ENCODE measurements at regions of chr2 and their contacts with region 1.

Region 1: GRCh38 chr2:196277002-196277401 is 105.6 kb upstream of the STK17B start:
- DNase-seq: no peak
- ATAC-seq: peak; percentile 48
- H3K4me3 Mint-ChIP-seq: no peak overlapping the region
- H3K27ac Mint-ChIP-seq: peak overlapping the region; percentile 95
- H3K4me1 Mint-ChIP-seq: peaks cover 41% of the 10 kb centered on the region
- H3K27me3 Mint-ChIP-seq: no peaks in the 10 kb centered on the region
- CTCF ChIP-seq: peak; percentile 34

Region 2: GRCh38 chr2:196076778-196077568 is 200.0 kb before region 1 on chr2:
- CTCF ChIA-PET with region 1: interaction called, 106 read pairs
- POLR2A ChIA-PET with region 1: interaction called, 22 read pairs
- intact Hi-C with region 1: loop called (anchors 1 kb)
- DNase-seq: no peak
- ATAC-seq: no peak
- H3K4me3 Mint-ChIP-seq: no peak overlapping the region
- H3K27ac Mint-ChIP-seq: peak overlapping the region; percentile 1
- H3K4me1 Mint-ChIP-seq: peaks cover 38% of the 10 kb centered on the region
- H3K27me3 Mint-ChIP-seq: no peaks in the 10 kb centered on the region
- CTCF ChIP-seq: no peak

Region 3: DNA sequence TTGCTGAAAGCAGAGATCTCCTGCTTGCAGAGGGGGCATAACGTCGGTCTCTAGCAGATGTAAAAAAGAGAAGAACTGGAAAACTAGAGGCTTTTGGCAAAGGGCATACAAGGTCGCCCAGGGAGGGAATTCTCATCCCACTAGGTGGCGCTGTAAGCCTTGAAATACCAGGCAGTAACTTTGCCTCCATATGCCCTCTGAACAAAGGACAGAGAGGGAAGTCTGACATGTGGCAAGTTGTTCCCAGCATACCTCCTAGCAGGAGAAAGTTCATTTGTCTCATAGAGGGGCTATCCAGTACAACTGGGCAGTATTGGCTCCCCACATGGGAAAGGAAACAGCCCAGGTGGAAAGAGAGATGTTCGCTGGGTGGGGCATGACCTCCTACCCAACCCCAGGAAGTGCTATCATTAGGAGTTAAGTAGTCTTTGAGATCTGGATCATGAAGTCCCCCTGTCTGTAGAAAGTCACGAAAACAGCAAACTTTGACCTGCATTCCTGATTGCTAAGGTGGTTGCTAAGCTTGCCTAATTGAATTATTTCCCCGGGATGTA is 145.5 kb before region 1 on chr2:
- CTCF ChIA-PET with region 1: interaction called, 12 read pairs
- POLR2A ChIA-PET with region 1: interaction called, 13 read pairs
- intact Hi-C with region 1: loop called (anchors 1 kb)
- DNase-seq: no peak
- ATAC-seq: peak; percentile 44
- H3K4me3 Mint-ChIP-seq: no peak overlapping the region
- H3K27ac Mint-ChIP-seq: peak overlapping the region; percentile 46
- H3K4me1 Mint-ChIP-seq: no peaks in the 10 kb centered on the region
- H3K27me3 Mint-ChIP-seq: no peaks in the 10 kb centered on the region
- CTCF ChIP-seq: no peak

Region 4: GRCh38 chr2:196160101-196160500 is 116.9 kb before region 1 on chr2:
- CTCF ChIA-PET with region 1: interaction called, 14 read pairs
- POLR2A ChIA-PET with region 1: interaction called, 13 read pairs
- intact Hi-C with region 1: loop called (anchors 2 kb)
- DNase-seq: no peak
- ATAC-seq: peak; percentile 75
- H3K4me3 Mint-ChIP-seq: peak overlapping the region; percentile 57
- H3K27ac Mint-ChIP-seq: peak overlapping the region; percentile 84
- H3K4me1 Mint-ChIP-seq: peaks cover 86% of the 10 kb centered on the region
- H3K27me3 Mint-ChIP-seq: no peaks in the 10 kb centered on the region
- CTCF ChIP-seq: no peak

Region 5: GRCh38 chr2:196205881-196206435 is 71.0 kb before region 1 on chr2:
- CTCF ChIA-PET with region 1: interaction called, 5 read pairs
- POLR2A ChIA-PET with region 1: interaction called, 6 read pairs
- intact Hi-C with region 1: loop called (anchors 1 kb)
- DNase-seq: no peak
- ATAC-seq: no peak
- H3K4me3 Mint-ChIP-seq: no peak overlapping the region
- H3K27ac Mint-ChIP-seq: peak overlapping the region; percentile 51
- H3K4me1 Mint-ChIP-seq: peaks cover 47% of the 10 kb centered on the region
- H3K27me3 Mint-ChIP-seq: no peaks in the 10 kb centered on the region
- CTCF ChIP-seq: no peak

Region 6: GRCh38 chr2:196249860-196250259 is 27.1 kb before region 1 on chr2:
- CTCF ChIA-PET with region 1: interaction called, 17 read pairs
- POLR2A ChIA-PET with region 1: interaction called, 18 read pairs
- intact Hi-C with region 1: loop called (anchors 1 kb)
- DNase-seq: peak; percentile 29
- ATAC-seq: peak; percentile 90
- H3K4me3 Mint-ChIP-seq: peak overlapping the region; percentile 47
- H3K27ac Mint-ChIP-seq: peak overlapping the region; percentile 91
- H3K4me1 Mint-ChIP-seq: peaks cover 75% of the 10 kb centered on the region
- H3K27me3 Mint-ChIP-seq: no peaks in the 10 kb centered on the region
- CTCF ChIP-seq: no peak

Region 7: DNA sequence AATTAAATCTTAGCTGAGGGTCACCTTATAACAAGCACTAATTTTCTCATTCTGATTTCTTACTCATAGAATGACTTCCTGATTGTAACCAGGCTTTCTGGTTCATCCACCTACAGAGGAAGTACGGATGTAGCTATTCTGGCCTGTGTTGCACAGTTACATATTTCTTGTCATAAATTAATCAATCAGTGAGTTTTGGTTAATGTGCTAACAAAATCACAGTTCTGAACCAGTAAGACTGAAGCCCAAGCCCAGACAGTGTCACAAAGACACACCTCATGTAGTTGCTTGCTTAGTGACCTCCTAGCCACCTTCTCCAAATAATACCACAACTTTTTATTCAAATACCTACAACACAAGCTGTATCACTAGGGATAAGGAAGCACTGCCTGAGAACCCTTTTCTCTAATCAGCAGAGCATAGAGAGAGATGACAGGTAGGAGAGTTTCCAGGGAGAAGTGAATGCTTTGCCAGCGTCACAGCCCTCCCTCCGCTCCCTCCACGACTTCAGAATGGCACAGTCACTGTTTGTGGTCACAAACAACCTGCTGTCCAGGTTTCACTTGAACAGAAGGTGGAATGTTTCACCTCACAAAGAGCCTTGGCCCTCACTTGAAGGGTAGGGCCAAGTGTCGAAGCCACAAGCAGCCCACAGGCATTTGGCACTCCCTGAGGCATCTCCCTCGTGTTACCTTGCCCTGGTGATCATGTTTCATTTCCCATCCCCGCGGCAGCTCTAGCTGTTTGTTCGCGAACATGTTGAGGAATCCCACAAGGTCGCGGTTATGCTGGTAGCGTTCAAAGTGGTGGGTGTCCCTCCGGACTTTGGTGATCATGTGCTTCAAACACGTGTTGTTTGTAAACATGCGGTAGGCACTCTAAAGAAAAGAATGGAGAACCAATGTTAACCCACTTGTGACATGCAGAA is 15.1 kb after region 1 on chr2:
- CTCF ChIA-PET with region 1: interaction called, 10 read pairs
- POLR2A ChIA-PET with region 1: interaction called, 4 read pairs
- intact Hi-C with region 1: loop called (anchors 1 kb)
- DNase-seq: no peak
- ATAC-seq: peak; percentile 59
- H3K4me3 Mint-ChIP-seq: peak overlapping the region; percentile 57
- H3K27ac Mint-ChIP-seq: peak overlapping the region; percentile 74
- H3K4me1 Mint-ChIP-seq: peaks cover 54% of the 10 kb centered on the region
- H3K27me3 Mint-ChIP-seq: no peaks in the 10 kb centered on the region
- CTCF ChIP-seq: no peak